Body of pancreas (tissue), 4 donors: ENCODE measurements at regions of chr1 and their contacts with region 1.

Region 1: DNA sequence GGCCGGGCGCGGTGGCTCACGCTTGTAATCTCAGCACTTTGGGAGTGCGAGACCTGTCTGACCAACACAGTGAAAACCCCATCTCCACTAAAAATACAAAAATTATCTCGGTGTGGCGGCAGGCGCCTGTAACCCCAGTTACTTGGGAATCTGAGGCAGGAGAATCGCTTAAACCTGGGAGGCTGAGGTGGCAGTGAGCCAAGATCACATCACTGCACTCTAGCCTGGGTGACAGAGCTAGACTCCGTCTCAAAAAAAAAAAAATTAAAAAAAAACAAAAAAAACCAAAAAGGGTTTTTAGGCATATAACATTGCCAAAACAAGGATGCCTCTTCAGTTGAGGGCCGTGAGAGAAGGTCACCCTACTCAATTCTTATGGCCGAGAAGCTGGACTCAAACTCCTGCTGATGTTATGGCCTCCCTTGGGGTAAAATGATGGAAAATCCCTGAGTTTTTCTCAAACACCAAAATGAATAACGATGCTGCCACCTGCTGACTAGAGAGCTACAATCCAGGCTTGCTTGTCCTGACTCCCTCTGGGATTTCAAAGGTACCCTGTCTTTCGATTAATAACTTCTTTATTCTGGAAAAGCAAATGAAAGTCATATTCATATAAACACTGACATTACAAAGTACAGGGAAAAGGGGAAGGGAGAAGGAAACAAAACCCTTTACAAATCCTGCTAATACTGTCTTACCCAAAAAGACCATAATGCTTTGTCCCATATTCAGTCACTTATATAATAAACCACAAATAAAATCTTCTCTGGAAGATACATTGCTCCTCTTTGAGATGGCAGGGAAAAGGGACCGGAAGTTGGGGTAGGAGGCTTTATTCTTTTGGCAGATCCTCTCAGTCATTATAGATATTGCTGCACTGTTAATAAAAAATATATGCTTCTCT is 10.7 kb downstream of the RAB42 start:
- DNase-seq: peak; percentile 58 to 74 (median 65)
- ATAC-seq: peak; percentile 70
- H3K4me3 ChIP-seq: no peak overlapping the region
- H3K27ac ChIP-seq: no peak overlapping the region
- H3K4me1 ChIP-seq: no peaks in the 10 kb centered on the region
- H3K27me3 ChIP-seq: no peaks in the 10 kb centered on the region
- CTCF ChIP-seq: peak; percentile 18 to 80 (median 64)
- POLR2A ChIP-seq: no peak

Region 2: DNA sequence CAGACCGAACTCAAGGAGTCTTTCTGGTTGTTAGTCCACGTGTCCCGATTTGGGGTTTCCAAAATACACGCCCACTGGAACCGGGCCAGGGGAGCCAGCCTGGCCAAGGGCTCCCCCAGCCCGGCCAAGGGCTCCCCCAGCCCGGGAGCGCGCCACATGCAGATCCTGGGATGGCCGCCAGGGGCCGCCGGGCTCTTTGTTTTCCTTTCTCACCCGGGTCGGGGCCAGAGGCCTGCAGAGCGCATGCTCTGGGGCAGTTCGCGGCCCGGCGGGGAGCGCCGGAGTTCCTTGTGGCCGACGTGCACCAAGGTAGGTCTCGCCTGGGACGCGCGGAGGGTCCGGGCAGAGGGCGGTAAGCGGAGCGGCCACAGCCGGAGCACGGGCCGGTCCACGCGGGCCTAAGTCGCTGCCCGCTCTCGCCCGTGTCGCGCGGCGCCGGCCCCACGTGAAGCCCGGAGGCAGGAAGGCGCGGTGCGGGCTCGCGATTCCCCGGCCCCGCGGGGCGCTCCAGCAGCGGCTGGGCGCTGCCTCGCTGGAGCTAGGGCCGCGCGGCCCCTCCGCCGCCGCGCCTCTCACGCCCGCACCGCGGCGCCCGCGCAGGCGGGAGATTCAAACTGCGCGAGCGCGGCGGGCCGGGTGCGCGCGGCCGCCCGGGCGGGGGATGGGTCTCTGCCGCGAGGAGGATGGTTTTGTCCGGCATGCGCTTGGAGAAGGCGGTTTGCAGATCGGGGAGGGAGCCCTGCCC is 84.6 kb before region 1 on chr1:
- intact Hi-C with region 1: loop called (anchors 5 kb)
- DNase-seq: peak; percentile 90 to 93 (median 91)
- ATAC-seq: peak; percentile 92
- H3K4me3 ChIP-seq: peak overlapping the region in 1 of 2 donors; percentile 48
- H3K27ac ChIP-seq: peak overlapping the region; percentile 77 to 93 (median 87)
- H3K4me1 ChIP-seq: peaks cover 27% of the 10 kb centered on the region
- H3K27me3 ChIP-seq: no peaks in the 10 kb centered on the region
- CTCF ChIP-seq: peak; percentile 95 to 99 (median 97)
- POLR2A ChIP-seq: peak; percentile 59 to 70 (median 68)

Region 3: DNA sequence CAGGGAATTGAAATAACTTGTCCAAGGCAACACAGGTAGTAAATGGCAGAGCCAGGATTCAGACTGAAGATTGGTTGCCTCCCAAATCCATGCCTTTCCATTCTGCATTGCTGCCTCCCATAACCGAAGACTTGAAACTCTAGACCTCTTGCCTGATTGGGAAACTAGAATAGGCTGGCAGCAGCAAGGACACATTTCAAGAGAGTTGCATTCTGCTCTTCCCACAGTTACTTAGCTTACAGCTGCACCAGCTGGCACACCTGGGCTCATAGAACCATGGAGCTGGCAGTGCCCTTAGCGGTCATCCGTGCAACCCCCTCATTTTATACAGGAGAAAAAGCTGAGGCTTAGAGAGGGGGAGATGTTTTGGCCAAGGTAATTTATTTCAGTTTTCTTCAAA is 41.9 kb before region 1 on chr1:
- intact Hi-C with region 1: no loop called
- DNase-seq: no peak
- ATAC-seq: no peak
- H3K4me3 ChIP-seq: no peak overlapping the region
- H3K27ac ChIP-seq: no peak overlapping the region
- H3K4me1 ChIP-seq: no peaks in the 10 kb centered on the region
- H3K27me3 ChIP-seq: no peaks in the 10 kb centered on the region
- CTCF ChIP-seq: no peak
- POLR2A ChIP-seq: no peak

Region 4: GRCh38 chr1:28663871-28664470 is 61.2 kb after region 1 on chr1:
- intact Hi-C with region 1: no loop called
- DNase-seq: no peak
- ATAC-seq: no peak
- H3K4me3 ChIP-seq: no peak overlapping the region
- H3K27ac ChIP-seq: no peak overlapping the region
- H3K4me1 ChIP-seq: peaks cover 5% of the 10 kb centered on the region
- H3K27me3 ChIP-seq: no peaks in the 10 kb centered on the region
- CTCF ChIP-seq: no peak
- POLR2A ChIP-seq: no peak

Region 5: GRCh38 chr1:28756846-28757245 is 154.1 kb after region 1 on chr1:
- intact Hi-C with region 1: no loop called
- DNase-seq: peak in 1 of 4 donors; percentile 10
- ATAC-seq: no peak
- H3K4me3 ChIP-seq: no peak overlapping the region
- H3K27ac ChIP-seq: no peak overlapping the region
- H3K4me1 ChIP-seq: peaks cover 50% of the 10 kb centered on the region
- H3K27me3 ChIP-seq: no peaks in the 10 kb centered on the region
- CTCF ChIP-seq: peak in 2 of 7 experiments; percentile 21 to 22
- POLR2A ChIP-seq: no peak

Region 6: GRCh38 chr1:29033829-29034466 is 431.2 kb after region 1 on chr1:
- intact Hi-C with region 1: no loop called
- DNase-seq: no peak
- ATAC-seq: peak; percentile 63
- H3K4me3 ChIP-seq: no peak overlapping the region
- H3K27ac ChIP-seq: no peak overlapping the region
- H3K4me1 ChIP-seq: no peaks in the 10 kb centered on the region
- H3K27me3 ChIP-seq: no peaks in the 10 kb centered on the region
- CTCF ChIP-seq: peak in 6 of 7 experiments; percentile 40 to 85 (median 76)
- POLR2A ChIP-seq: no peak